Posterior vena cava (tissue), 2 donors: ENCODE measurements at regions of chr10 and their contacts with region 1.

Region 1: GRCh38 chr10:125822878-125823662 is at the starts of genes BCCIP and UROS:
- DNase-seq: peak; percentile 97
- total RNA-seq, gene BCCIP: 37.5 to 38.8 TPM
- total RNA-seq, gene UROS: 28.2 to 31.4 TPM

Region 2: DNA sequence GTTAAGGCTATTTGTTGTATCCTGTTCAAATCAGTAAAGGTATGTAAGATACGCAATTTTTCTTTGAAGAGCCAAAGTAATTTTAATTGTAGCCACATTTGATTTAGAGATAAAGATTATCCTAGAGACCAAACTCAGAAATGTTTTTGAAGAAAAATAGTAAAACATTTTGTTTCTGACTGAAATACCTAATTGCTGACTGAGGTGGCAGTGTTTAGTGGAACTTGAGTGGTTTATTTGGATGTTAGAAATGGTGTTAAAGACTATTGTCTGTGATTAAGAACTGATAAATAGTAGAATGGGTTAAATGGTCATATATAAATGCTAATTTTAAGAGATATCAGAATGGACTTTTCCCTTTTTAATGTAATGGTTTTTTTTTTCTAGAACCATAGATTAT is 88.2 kb before region 1 on chr10:
- intact Hi-C with region 1: loop called in 1 of 2 experiments (anchors 10 kb)
- DNase-seq: no peak

Region 3: DNA sequence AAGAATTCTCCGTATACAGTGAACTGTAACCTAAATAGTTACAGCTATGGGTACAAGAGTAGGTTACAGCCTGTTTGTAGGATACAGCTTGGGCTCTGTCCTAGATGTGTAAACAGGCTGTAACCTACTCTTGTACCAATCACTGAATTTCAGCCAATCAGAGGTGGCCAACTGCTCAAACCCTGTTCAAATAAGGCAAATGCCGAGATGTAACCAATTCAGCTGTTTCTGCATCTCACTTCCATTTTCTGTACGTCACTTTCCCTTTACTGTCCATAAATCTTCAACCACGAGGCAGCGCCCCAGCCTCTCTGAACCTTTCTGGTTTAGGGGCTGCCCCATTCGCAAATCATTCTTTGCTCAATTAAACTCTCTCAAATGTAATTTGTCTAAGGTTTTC is 39.1 kb before region 1 on chr10:
- intact Hi-C with region 1: no loop called
- DNase-seq: no peak